ENCODE measurements at regions of chr20 and their contacts with region 1.

Region 1: DNA sequence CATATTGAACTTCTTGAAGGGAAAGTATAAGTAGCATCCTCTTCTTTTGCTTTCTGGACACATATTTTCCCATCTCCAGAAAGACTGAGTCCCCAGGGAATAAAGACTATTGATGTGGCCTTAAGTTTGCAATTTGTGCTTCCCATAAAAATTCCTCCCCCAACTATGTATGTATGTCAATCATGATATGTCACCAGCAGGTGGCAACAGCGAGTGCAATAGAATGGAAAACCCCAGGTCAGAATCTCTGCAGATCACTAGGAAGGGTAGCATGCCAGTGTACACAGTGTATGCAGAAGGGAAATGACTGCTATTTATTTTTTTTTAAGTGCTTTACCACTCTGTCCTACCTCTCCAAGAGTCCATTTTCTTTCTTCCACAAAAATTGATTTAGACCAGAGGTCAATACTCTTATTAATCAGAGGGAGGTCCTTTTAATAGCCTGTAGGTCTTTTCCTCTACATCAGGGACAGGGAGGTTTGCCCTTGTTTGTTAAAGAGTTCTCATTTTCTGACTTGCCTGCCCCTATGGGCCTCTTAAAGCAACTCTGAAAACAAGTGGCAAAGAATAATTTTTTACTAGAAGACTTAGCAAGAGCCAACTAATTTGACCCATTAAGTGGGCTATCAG is 61.4 kb downstream of the BMP2 start:
- DNase-seq: peak; percentile 82
- H3K4me3 Mint-ChIP-seq: no peak overlapping the region
- H3K27ac Mint-ChIP-seq: no peak overlapping the region
- H3K4me1 Mint-ChIP-seq: no peaks in the 10 kb centered on the region
- H3K27me3 Mint-ChIP-seq: no peaks in the 10 kb centered on the region
- CTCF ChIP-seq: peak; percentile 47

Region 2: DNA sequence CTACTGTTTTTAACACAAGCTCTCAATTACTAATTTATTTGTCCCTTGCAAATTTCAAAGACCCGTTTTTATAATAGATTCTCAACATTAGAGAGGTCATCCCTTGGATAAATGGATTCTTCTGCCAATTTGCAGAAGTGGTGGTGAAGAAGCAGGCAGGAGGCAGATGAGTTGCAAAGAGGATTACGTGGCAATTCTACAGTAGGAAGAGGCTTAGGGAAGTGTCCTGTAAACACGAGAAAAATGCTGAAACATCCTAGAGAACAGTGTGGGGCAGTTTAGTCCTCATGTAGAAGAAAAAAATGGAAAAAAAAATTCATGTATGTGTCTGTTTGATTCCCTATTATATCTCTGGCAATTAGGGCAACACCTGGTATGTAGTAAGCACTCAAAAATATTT is 26.2 kb after region 1 on chr20:
- CTCF ChIA-PET with region 1: interaction called, 15 read pairs
- POLR2A ChIA-PET with region 1: no interaction called
- intact Hi-C with region 1: no loop called
- DNase-seq: no peak
- H3K4me3 Mint-ChIP-seq: no peak overlapping the region
- H3K27ac Mint-ChIP-seq: no peak overlapping the region
- H3K4me1 Mint-ChIP-seq: no peaks in the 10 kb centered on the region
- H3K27me3 Mint-ChIP-seq: no peaks in the 10 kb centered on the region
- CTCF ChIP-seq: no peak

Region 3: DNA sequence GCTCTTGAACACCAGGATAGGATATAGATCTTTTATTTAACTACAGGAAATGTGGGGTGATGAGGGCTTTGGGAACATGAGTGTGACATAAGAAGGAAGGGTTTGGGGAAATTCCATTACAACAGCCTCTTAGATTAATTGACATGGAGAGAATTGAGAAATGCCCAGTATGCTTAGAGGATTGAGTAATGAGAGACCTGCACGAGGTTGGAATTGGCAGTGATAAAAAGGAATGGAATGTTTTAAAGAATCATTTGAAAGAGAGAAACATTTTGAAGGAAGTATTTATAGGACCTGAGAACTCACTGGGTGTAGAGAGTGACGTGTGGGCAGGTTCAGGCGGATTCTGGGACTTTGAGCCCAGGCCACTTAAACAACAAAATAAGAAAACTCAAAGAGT is 165.5 kb after region 1 on chr20:
- CTCF ChIA-PET with region 1: interaction called, 7 read pairs
- POLR2A ChIA-PET with region 1: interaction called, 3 read pairs
- intact Hi-C with region 1: loop called (anchors 2 kb)
- DNase-seq: peak; percentile 93
- H3K4me3 Mint-ChIP-seq: peak overlapping the region; percentile 45
- H3K27ac Mint-ChIP-seq: peak overlapping the region; percentile 98
- H3K4me1 Mint-ChIP-seq: peaks cover 47% of the 10 kb centered on the region
- H3K27me3 Mint-ChIP-seq: no peaks in the 10 kb centered on the region
- CTCF ChIP-seq: no peak

Region 4: GRCh38 chr20:7113577-7114466 is 284.9 kb after region 1 on chr20:
- CTCF ChIA-PET with region 1: interaction called, 13 read pairs
- POLR2A ChIA-PET with region 1: no interaction called
- intact Hi-C with region 1: no loop called
- DNase-seq: peak; percentile 70
- H3K4me3 Mint-ChIP-seq: no peak overlapping the region
- H3K27ac Mint-ChIP-seq: no peak overlapping the region
- H3K4me1 Mint-ChIP-seq: peaks cover 8% of the 10 kb centered on the region
- H3K27me3 Mint-ChIP-seq: no peaks in the 10 kb centered on the region
- CTCF ChIP-seq: peak; percentile 67

Region 5: GRCh38 chr20:7272512-7272911 is 443.6 kb after region 1 on chr20:
- CTCF ChIA-PET with region 1: interaction called, 8 read pairs
- POLR2A ChIA-PET with region 1: interaction called, 3 read pairs
- intact Hi-C with region 1: loop called (anchors 1 kb)
- DNase-seq: peak; percentile 18
- H3K4me3 Mint-ChIP-seq: no peak overlapping the region
- H3K27ac Mint-ChIP-seq: no peak overlapping the region
- H3K4me1 Mint-ChIP-seq: no peaks in the 10 kb centered on the region
- H3K27me3 Mint-ChIP-seq: no peaks in the 10 kb centered on the region
- CTCF ChIP-seq: peak; percentile 35

Region 6: DNA sequence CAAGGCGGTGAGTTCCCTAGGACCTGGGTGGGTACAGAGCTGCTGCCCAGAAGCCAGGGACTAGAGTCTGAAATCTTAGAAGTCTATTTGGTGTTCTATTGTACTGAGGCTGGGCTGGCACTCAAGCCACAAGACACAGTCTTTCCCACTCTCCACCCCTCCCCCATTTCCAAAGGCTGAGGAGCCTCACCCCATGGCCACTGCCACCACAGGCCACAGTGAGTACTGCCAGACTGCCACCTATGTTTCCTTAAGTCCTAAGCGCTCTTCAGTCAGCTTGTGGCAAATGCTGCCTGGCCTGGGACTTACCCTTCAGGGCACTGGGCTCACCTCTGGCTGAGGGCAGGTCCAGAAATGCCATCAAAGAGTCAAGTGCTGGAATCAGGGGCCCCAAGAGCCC is 642.0 kb after region 1 on chr20:
- CTCF ChIA-PET with region 1: no interaction called
- POLR2A ChIA-PET with region 1: no interaction called
- intact Hi-C with region 1: no loop called
- DNase-seq: no peak
- H3K4me3 Mint-ChIP-seq: no peak overlapping the region
- H3K27ac Mint-ChIP-seq: no peak overlapping the region
- H3K4me1 Mint-ChIP-seq: no peaks in the 10 kb centered on the region
- H3K27me3 Mint-ChIP-seq: no peaks in the 10 kb centered on the region
- CTCF ChIP-seq: no peak

Region 7: DNA sequence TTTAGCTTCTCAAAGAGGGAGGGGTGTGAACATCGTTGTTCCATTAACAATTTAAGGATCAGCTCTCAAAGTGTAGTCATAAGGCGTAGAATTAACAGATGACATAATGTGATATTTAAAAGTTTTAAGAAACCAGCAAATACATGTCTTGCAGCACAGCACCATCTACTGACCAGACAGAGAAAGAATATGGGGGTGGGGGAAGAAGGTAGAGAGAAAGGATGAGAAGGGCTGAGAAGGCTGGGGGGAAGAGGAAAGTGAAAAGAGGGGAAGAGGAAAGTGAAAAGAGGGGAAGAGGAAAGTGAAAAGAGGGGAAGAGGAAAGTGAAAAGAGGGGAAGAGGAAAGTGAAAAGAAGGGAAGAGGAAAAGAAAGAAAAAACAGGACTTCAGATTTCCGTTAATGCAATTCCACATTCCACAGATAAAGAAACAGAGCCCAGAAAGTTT is 1030.5 kb after region 1 on chr20:
- CTCF ChIA-PET with region 1: interaction called, 7 read pairs
- POLR2A ChIA-PET with region 1: no interaction called
- intact Hi-C with region 1: loop called (anchors 1 kb)
- DNase-seq: peak; percentile 79
- H3K4me3 Mint-ChIP-seq: no peak overlapping the region
- H3K27ac Mint-ChIP-seq: peak overlapping the region; percentile 23
- H3K4me1 Mint-ChIP-seq: peaks cover 33% of the 10 kb centered on the region
- H3K27me3 Mint-ChIP-seq: no peaks in the 10 kb centered on the region
- CTCF ChIP-seq: peak; percentile 50

Measured in MCF 10A (cell line).